ENCODE measurements at regions of chr19 and their contacts with region 1.

Region 1: DNA sequence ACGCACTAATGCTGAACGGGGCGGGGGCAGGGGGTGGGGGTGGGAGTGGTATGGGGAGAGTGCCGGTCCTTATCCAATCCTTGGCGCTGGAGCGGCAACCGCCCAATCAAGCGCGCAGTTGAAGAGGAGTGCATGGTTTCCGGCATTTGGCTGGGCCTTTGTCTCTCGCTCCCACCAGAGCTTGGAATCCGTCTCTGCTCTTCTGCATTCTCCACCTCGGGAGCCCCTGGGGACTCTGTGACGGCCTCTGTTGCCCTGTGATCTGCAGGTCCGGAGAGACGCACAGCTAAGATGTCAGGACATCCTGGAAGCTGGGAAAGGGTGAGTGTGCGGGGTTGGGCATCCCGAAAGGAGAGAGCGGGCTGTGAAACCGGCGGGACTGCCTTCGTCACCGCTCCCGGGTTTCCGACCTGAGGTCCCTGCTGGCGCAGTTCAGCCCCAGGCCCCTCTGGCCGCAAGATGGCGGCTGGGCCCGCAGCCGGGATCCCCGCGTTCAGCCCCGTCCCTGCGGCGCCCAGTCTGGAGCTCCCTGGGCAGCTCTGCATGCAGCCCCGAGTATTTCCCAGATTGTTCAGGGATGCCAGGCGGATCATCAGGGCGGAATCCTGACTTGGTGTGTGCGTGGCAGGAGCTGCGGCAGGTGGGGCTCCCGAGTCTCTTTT is 53.6 kb upstream of the ZNF254 start:
- DNase-seq: peak; percentile 50 to 89 (median 84)
- ATAC-seq: peak; percentile 99
- H3K4me3 ChIP-seq: peak overlapping the region; percentile 100
- H3K4me3 Mint-ChIP-seq: peak overlapping the region; percentile 99 to 100 (median 100)
- H3K27ac ChIP-seq: peak overlapping the region; percentile 90
- H3K27ac Mint-ChIP-seq: peak overlapping the region; percentile 96 to 100 (median 98)
- H3K4me1 ChIP-seq: peaks cover 11 to 24% of the 10 kb centered on the region in 2 donors
- H3K4me1 Mint-ChIP-seq: peaks cover 18 to 63% (median 56%) of the 10 kb centered on the region in 7 donors
- H3K27me3 ChIP-seq: no peaks in the 10 kb centered on the region
- H3K27me3 Mint-ChIP-seq: no peaks in the 10 kb centered on the region

Region 2: GRCh38 chr19:22634450-22634827 is 1399.0 kb before region 1 on chr19:
- CTCF ChIA-PET with region 1: no interaction called
- POLR2A ChIA-PET with region 1: no interaction called
- intact Hi-C with region 1: loop called in 1 of 2 experiments (anchors 5 kb)
- DNase-seq: no peak
- ATAC-seq: no peak
- H3K4me3 ChIP-seq: peak overlapping the region; percentile 63
- H3K4me3 Mint-ChIP-seq: peak overlapping the region; percentile 70 to 98 (median 93)
- H3K27ac ChIP-seq: peak overlapping the region; percentile 55
- H3K27ac Mint-ChIP-seq: peak overlapping the region in 8 of 9 donors; percentile 59 to 95 (median 82)
- H3K4me1 ChIP-seq: no peaks in the 10 kb centered on the region
- H3K4me1 Mint-ChIP-seq: peaks cover 0 to 16% (median 5%) of the 10 kb centered on the region in 7 donors
- H3K27me3 ChIP-seq: no peaks in the 10 kb centered on the region
- H3K27me3 Mint-ChIP-seq: no peaks in the 10 kb centered on the region

Region 3: GRCh38 chr19:23249911-23250649 is 783.4 kb before region 1 on chr19 and contains the start of gene ZNF724:
- CTCF ChIA-PET with region 1: no interaction called
- POLR2A ChIA-PET with region 1: no interaction called
- intact Hi-C with region 1: loop called (anchors 1 kb)
- DNase-seq: peak; percentile 66 to 91 (median 88)
- ATAC-seq: peak; percentile 100
- H3K4me3 ChIP-seq: peak within 1 kb of the TSS; percentile 84
- H3K4me3 Mint-ChIP-seq: peak within 1 kb of the TSS; percentile 95 to 99 (median 96)
- H3K27ac ChIP-seq: peak within 1 kb of the TSS; percentile 72
- H3K27ac Mint-ChIP-seq: peak within 1 kb of the TSS; percentile 61 to 96 (median 89)
- H3K4me1 ChIP-seq: peaks cover 0 to 6% of the 10 kb centered on the region in 2 donors
- H3K4me1 Mint-ChIP-seq: peaks cover 6 to 22% (median 10%) of the 10 kb centered on the region in 7 donors
- H3K27me3 ChIP-seq: no peaks in the 10 kb centered on the region
- H3K27me3 Mint-ChIP-seq: no peaks in the 10 kb centered on the region
- total RNA-seq, gene ZNF724: 2.9 to 11.3 (median 6.8) TPM

Region 4: GRCh38 chr19:23273590-23274413 is 759.6 kb before region 1 on chr19:
- CTCF ChIA-PET with region 1: no interaction called
- POLR2A ChIA-PET with region 1: interaction called, 14 read pairs
- intact Hi-C with region 1: loop called (anchors 1 to 10 kb)
- DNase-seq: peak; percentile 76 to 93 (median 91)
- ATAC-seq: peak; percentile 100
- H3K4me3 ChIP-seq: peak overlapping the region; percentile 94
- H3K4me3 Mint-ChIP-seq: peak overlapping the region; percentile 94 to 99 (median 98)
- H3K27ac ChIP-seq: peak overlapping the region; percentile 95
- H3K27ac Mint-ChIP-seq: peak overlapping the region; percentile 92 to 98 (median 96)
- H3K4me1 ChIP-seq: peaks cover 0 to 7% of the 10 kb centered on the region in 2 donors
- H3K4me1 Mint-ChIP-seq: peaks cover 15 to 47% (median 30%) of the 10 kb centered on the region in 7 donors
- H3K27me3 ChIP-seq: no peaks in the 10 kb centered on the region
- H3K27me3 Mint-ChIP-seq: no peaks in the 10 kb centered on the region

Region 5: GRCh38 chr19:23395041-23395721 is 638.3 kb before region 1 on chr19 and contains the start of gene ZNF91:
- CTCF ChIA-PET with region 1: no interaction called
- POLR2A ChIA-PET with region 1: interaction called, 11 read pairs
- intact Hi-C with region 1: loop called (anchors 1 kb)
- DNase-seq: peak; percentile 73 to 96 (median 92)
- ATAC-seq: peak; percentile 98
- H3K4me3 ChIP-seq: peak within 1 kb of the TSS; percentile 96
- H3K4me3 Mint-ChIP-seq: peak within 1 kb of the TSS; percentile 96 to 99 (median 98)
- H3K27ac ChIP-seq: peak within 1 kb of the TSS; percentile 96
- H3K27ac Mint-ChIP-seq: peak within 1 kb of the TSS; percentile 94 to 99 (median 98)
- H3K4me1 ChIP-seq: peaks cover 12% of the 10 kb centered on the region in 2 donors
- H3K4me1 Mint-ChIP-seq: peaks cover 4 to 43% (median 37%) of the 10 kb centered on the region in 7 donors
- H3K27me3 ChIP-seq: no peaks in the 10 kb centered on the region
- H3K27me3 Mint-ChIP-seq: no peaks in the 10 kb centered on the region
- total RNA-seq, gene ZNF91: 40.5 to 165 (median 90.6) TPM

Region 6: DNA sequence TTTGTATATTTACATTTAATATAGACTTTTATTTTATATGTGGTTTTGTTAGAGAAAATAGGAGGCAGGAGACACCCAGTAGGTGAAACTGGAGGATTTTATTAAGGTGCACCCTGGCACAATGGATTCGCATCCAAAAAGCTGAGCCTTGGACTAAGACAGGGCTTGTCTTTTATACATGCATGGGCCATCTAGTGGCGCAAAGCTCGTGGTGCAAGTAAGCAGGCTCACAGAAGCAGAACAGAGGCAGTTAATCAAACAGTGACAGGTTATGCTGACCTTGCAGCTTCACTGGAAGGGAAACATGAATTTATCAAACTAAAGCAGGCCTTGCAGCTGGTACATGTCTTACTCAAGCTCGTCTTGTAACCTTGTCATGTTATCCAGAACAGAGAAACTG is 215.9 kb before region 1 on chr19:
- CTCF ChIA-PET with region 1: no interaction called
- POLR2A ChIA-PET with region 1: no interaction called
- intact Hi-C with region 1: no loop called
- DNase-seq: peak in 6 of 9 donors; percentile 13 to 39 (median 26)
- ATAC-seq: peak; percentile 63
- H3K4me3 ChIP-seq: no peak overlapping the region
- H3K4me3 Mint-ChIP-seq: no peak overlapping the region
- H3K27ac ChIP-seq: no peak overlapping the region
- H3K27ac Mint-ChIP-seq: peak overlapping the region in 1 of 9 donors; percentile 4
- H3K4me1 ChIP-seq: no peaks in the 10 kb centered on the region
- H3K4me1 Mint-ChIP-seq: peaks cover 0 to 3% (median 0%) of the 10 kb centered on the region in 7 donors
- H3K27me3 ChIP-seq: no peaks in the 10 kb centered on the region
- H3K27me3 Mint-ChIP-seq: no peaks in the 10 kb centered on the region

Region 7: GRCh38 chr19:23971598-23971997 is 61.8 kb before region 1 on chr19:
- CTCF ChIA-PET with region 1: no interaction called
- POLR2A ChIA-PET with region 1: no interaction called
- intact Hi-C with region 1: no loop called
- DNase-seq: no peak
- ATAC-seq: no peak
- H3K4me3 ChIP-seq: no peak overlapping the region
- H3K4me3 Mint-ChIP-seq: peak overlapping the region in 3 of 10 donors; percentile 30 to 43 (median 40)
- H3K27ac ChIP-seq: no peak overlapping the region
- H3K27ac Mint-ChIP-seq: no peak overlapping the region
- H3K4me1 ChIP-seq: no peaks in the 10 kb centered on the region
- H3K4me1 Mint-ChIP-seq: peaks cover 0 to 10% (median 5%) of the 10 kb centered on the region in 7 donors
- H3K27me3 ChIP-seq: no peaks in the 10 kb centered on the region
- H3K27me3 Mint-ChIP-seq: peaks cover 0 to 46% (median 39%) of the 10 kb centered on the region in 5 donors

Region 8: DNA sequence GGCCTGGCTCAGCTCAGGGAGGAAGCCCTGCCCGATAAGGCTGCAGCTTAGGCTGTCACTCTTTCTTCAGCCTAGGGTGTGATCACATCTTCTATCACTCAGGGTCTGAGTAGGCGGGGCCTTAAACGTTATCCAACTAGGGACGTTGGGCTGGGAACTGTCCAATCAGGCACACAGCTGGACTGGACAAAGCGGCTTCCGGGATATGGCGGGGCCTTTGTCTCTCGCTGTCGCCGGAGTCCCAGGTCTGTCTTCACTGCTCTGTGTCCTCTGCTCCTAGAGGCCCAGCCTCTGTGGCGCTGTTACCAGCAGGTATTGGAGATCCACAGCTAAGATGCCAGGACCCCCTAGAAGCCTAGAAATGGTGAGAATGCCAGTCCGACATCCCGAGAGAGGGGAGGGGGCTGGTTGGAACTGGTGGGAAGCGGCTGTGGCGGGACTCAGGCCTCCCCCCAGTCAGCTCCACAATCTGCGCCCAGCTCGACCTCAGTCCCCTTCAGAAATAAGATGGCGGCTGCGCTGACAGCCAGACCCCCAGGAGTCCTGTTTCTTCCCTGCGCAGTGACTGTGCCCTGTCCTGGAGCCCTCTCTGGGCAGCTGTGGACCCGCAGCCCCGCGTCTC is 53.7 kb after region 1 on chr19 and contains the start of gene ZNF254:
- CTCF ChIA-PET with region 1: no interaction called
- POLR2A ChIA-PET with region 1: interaction called, 21 read pairs
- intact Hi-C with region 1: loop called (anchors 1 to 2 kb)
- DNase-seq: peak; percentile 48 to 75 (median 65)
- ATAC-seq: peak; percentile 99
- H3K4me3 ChIP-seq: peak within 1 kb of the TSS; percentile 92
- H3K4me3 Mint-ChIP-seq: peak within 1 kb of the TSS; percentile 90 to 96 (median 93)
- H3K27ac ChIP-seq: peak within 1 kb of the TSS; percentile 83
- H3K27ac Mint-ChIP-seq: peak within 1 kb of the TSS; percentile 90 to 96 (median 93)
- H3K4me1 ChIP-seq: no peaks in the 10 kb centered on the region
- H3K4me1 Mint-ChIP-seq: peaks cover 3 to 17% (median 5%) of the 10 kb centered on the region in 7 donors
- H3K27me3 ChIP-seq: no peaks in the 10 kb centered on the region
- H3K27me3 Mint-ChIP-seq: no peaks in the 10 kb centered on the region
- total RNA-seq, gene ZNF254: 10.8 to 17.1 (median 15.5) TPM

Measured in naive thymus-derived CD4-positive, alpha-beta T cell (primary cell).